Esophagus muscularis mucosa (tissue), 4 donors: ENCODE measurements at regions of chr20 and their contacts with region 1.

Region 1: DNA sequence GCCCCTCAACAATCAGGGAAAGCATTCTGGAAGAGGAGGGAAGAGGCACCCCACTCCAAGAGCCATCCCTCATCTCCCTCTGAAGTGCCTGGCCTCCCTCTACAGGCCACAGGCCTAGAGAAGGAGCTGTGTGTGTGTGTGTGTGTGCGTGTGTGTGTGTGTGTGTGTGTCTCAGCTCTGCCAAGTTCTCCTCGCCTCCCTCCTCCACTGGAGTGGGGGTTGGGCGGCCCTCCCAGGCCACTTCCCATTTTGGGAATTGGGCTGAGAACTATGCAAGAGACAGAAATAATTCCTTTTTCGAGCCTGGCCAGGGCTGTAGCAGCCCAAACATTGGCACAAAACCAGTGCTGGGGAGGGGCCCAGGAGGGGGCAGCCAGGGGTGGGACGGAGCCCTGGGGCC is 35.7 kb downstream of the KCNB1 start:
- DNase-seq: peak; percentile 94
- H3K4me3 ChIP-seq: peak overlapping the region; percentile 3 to 46 (median 24)
- H3K27ac ChIP-seq: peak overlapping the region; percentile 85 to 88 (median 86)
- H3K4me1 ChIP-seq: peaks cover 37 to 96% (median 92%) of the 10 kb centered on the region in 4 donors
- H3K27me3 ChIP-seq: no peaks in the 10 kb centered on the region
- CTCF ChIP-seq: peak in 2 of 3 experiments; percentile 29 to 53
- EP300 ChIP-seq: peak; percentile 21
- POLR2A ChIP-seq: no peak

Region 2: GRCh38 chr20:49297605-49298530 is 148.9 kb before region 1 on chr20:
- intact Hi-C with region 1: no loop called
- DNase-seq: no peak
- H3K4me3 ChIP-seq: no peak overlapping the region
- H3K27ac ChIP-seq: no peak overlapping the region
- H3K4me1 ChIP-seq: peaks cover 0 to 5% (median 0%) of the 10 kb centered on the region in 4 donors
- H3K27me3 ChIP-seq: no peaks in the 10 kb centered on the region
- CTCF ChIP-seq: no peak
- EP300 ChIP-seq: no peak
- POLR2A ChIP-seq: no peak

Region 3: GRCh38 chr20:49397525-49397924 is 49.3 kb before region 1 on chr20:
- intact Hi-C with region 1: loop called (anchors 5 kb)
- DNase-seq: no peak
- H3K4me3 ChIP-seq: no peak overlapping the region
- H3K27ac ChIP-seq: peak overlapping the region; percentile 89 to 94 (median 92)
- H3K4me1 ChIP-seq: peaks cover 48 to 100% (median 98%) of the 10 kb centered on the region in 4 donors
- H3K27me3 ChIP-seq: no peaks in the 10 kb centered on the region
- CTCF ChIP-seq: no peak
- EP300 ChIP-seq: no peak
- POLR2A ChIP-seq: no peak

Region 4: DNA sequence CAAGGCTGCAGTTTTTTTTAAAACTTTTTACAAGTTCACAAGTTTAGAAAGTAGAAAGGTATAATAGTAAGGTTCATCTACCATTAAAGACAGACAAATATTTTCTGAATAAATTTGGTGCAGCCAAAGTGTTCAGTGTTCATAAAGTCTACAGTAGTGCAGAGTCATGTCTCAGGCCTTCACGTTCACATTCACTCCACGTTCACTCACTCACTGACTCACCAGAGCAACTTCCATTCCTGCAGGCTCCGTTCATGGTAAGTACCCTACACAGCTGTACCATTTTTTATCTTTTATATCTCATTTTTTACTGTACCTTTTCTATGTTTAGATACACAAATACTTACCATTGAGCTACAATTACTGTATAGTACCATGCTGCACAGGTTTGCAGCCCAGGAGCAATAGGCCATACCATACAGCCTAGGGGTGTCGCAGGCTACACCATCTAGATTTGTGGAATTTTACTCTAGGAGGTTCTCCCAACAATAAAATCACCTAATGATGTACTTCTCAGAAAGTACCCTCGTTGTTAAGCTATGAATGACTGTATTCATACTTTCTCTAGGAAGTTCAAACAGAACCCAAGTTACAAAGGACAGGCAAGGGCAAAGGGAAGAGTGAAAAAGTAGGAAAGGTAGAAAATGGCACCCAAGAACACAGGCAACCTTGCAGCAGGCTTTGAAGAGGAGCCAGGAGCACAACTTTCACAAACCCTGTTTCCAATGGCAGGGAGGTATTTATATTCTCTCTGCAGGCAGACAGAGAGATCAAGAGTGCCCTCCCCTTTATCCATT is 199.5 kb after region 1 on chr20:
- intact Hi-C with region 1: no loop called
- DNase-seq: no peak
- H3K4me3 ChIP-seq: no peak overlapping the region
- H3K27ac ChIP-seq: no peak overlapping the region
- H3K4me1 ChIP-seq: no peaks in the 10 kb centered on the region
- H3K27me3 ChIP-seq: no peaks in the 10 kb centered on the region
- CTCF ChIP-seq: no peak
- EP300 ChIP-seq: no peak
- POLR2A ChIP-seq: no peak